ENCODE measurements at regions of chr1 and their contacts with region 1.

Region 1: GRCh38 chr1:201447911-201448871 is 20.8 kb downstream of the PHLDA3 start:
- DNase-seq: peak; percentile 15 to 64 (median 28)
- H3K4me3 ChIP-seq: no peak overlapping the region
- H3K4me3 Mint-ChIP-seq: no peak overlapping the region
- H3K27ac ChIP-seq: no peak overlapping the region
- H3K27ac Mint-ChIP-seq: no peak overlapping the region
- H3K4me1 ChIP-seq: peaks cover 8% of the 10 kb centered on the region
- H3K4me1 Mint-ChIP-seq: peaks cover 0 to 6% (median 3%) of the 10 kb centered on the region in 3 donors
- H3K27me3 ChIP-seq: no peaks in the 10 kb centered on the region
- H3K27me3 Mint-ChIP-seq: peaks cover 6 to 31% of the 10 kb centered on the region in 2 donors

Region 2: GRCh38 chr1:201127755-201128455 is 320.3 kb before region 1 on chr1:
- CTCF ChIA-PET with region 1: no interaction called
- POLR2A ChIA-PET with region 1: no interaction called
- DNase-seq: peak in 1 of 5 donors; percentile 30
- H3K4me3 ChIP-seq: no peak overlapping the region
- H3K4me3 Mint-ChIP-seq: no peak overlapping the region
- H3K27ac ChIP-seq: no peak overlapping the region
- H3K27ac Mint-ChIP-seq: no peak overlapping the region
- H3K4me1 ChIP-seq: no peaks in the 10 kb centered on the region
- H3K4me1 Mint-ChIP-seq: no peaks in the 10 kb centered on the region
- H3K27me3 ChIP-seq: peaks cover 15% of the 10 kb centered on the region
- H3K27me3 Mint-ChIP-seq: peaks cover 6 to 42% of the 10 kb centered on the region in 2 donors

Region 3: GRCh38 chr1:201436393-201436792 is 11.8 kb before region 1 on chr1:
- CTCF ChIA-PET with region 1: interaction called, 22 read pairs
- POLR2A ChIA-PET with region 1: no interaction called
- DNase-seq: no peak
- H3K4me3 ChIP-seq: no peak overlapping the region
- H3K4me3 Mint-ChIP-seq: no peak overlapping the region
- H3K27ac ChIP-seq: no peak overlapping the region
- H3K27ac Mint-ChIP-seq: no peak overlapping the region
- H3K4me1 ChIP-seq: no peaks in the 10 kb centered on the region
- H3K4me1 Mint-ChIP-seq: peaks cover 4 to 6% (median 6%) of the 10 kb centered on the region in 3 donors
- H3K27me3 ChIP-seq: no peaks in the 10 kb centered on the region
- H3K27me3 Mint-ChIP-seq: peaks cover 12 to 45% of the 10 kb centered on the region in 2 donors